ENCODE measurements at regions of chr18 and their contacts with region 1.

Region 1: DNA sequence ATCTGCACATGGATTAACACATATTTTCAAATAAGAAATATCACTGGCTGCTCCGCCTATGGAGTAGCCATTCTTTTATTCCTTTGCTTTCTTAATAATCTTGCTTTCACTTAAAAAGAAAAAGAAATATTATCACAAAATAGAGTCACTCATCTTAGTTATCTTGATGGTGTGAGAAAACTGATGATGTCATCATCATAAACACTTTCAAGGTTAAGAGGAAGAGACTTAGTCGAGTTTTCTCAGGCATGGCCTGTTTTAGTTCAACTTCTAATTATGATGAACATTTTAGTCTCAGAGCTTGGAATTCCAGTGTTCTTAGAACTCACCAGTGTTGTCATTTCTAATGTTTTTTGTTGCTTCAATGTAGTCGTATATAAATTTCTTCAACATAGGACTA is 506.1 kb downstream of the PTPRM start:
- DNase-seq: no peak
- ATAC-seq: no peak
- H3K4me3 Mint-ChIP-seq: no peak overlapping the region
- H3K27ac Mint-ChIP-seq: no peak overlapping the region
- H3K4me1 Mint-ChIP-seq: no peaks in the 10 kb centered on the region
- H3K27me3 Mint-ChIP-seq: no peaks in the 10 kb centered on the region
- CTCF ChIP-seq: no peak

Region 2: DNA sequence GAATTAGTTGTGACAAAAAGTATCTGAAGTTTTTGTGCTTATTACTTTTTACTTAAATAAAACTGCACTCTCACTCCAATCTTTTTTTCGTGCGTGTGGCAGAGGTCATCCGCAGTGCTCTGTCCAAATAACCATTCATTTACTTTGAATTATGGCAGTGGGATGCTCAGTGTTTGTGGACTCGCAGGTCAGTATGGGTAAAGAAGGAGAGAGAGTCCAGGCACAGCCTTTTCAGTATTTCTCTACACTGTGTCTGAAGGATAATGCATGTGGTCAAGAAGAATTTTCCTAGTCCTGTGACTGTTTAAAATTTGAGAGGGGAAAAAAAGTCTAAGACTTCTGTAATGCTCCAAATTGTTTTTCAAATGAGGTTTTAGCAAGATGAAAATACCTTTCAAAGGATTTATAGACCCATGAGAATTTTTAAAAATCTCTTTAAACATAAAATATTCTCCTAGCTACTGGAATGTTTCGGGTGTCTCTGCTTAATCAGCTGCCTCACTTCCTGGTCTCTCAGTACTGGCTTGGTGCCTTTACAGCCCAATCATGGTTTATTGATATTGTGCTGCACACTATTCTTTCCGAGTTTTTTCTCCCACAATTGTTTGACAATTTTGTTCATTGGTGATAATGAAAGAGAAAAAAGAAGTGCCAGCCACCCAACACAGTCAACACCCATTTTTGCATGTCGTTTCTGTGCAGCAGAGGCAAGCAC is 52.9 kb before region 1 on chr18:
- CTCF ChIA-PET with region 1: no interaction called
- POLR2A ChIA-PET with region 1: no interaction called
- intact Hi-C with region 1: no loop called
- DNase-seq: no peak
- ATAC-seq: no peak
- H3K4me3 Mint-ChIP-seq: no peak overlapping the region
- H3K27ac Mint-ChIP-seq: no peak overlapping the region
- H3K4me1 Mint-ChIP-seq: no peaks in the 10 kb centered on the region
- H3K27me3 Mint-ChIP-seq: no peaks in the 10 kb centered on the region
- CTCF ChIP-seq: no peak

Region 3: DNA sequence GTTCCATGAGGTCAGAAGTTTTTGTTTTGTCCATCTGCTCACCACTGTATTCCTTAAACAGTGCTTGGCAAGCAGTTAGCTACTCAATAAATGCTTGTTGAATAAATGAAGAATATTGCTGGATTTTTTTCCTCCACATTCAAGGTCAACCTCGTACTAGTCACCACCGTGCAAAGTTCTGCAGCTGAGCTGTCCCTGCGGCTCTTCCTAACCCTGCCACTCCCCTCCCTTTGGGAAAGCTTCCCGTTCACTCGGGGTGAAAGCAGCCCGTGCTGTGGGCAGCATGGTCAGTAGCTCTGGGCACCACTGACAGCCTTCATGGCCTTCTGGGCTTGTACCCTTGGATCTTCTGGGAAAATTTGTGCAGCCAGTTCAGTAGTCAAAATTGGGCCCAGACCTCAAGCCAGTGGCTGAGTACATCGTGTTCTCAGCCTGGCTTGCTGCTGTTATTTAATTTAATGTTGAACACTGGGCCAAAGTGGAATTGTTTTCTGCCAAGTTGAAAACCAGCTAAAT is 66.8 kb after region 1 on chr18:
- CTCF ChIA-PET with region 1: no interaction called
- POLR2A ChIA-PET with region 1: no interaction called
- intact Hi-C with region 1: loop called (anchors 10 kb)
- DNase-seq: no peak
- ATAC-seq: no peak
- H3K4me3 Mint-ChIP-seq: no peak overlapping the region
- H3K27ac Mint-ChIP-seq: no peak overlapping the region
- H3K4me1 Mint-ChIP-seq: no peaks in the 10 kb centered on the region
- H3K27me3 Mint-ChIP-seq: no peaks in the 10 kb centered on the region
- CTCF ChIP-seq: no peak